IMR-90 (cell line): ENCODE measurements at regions of chr14 and their contacts with region 1.

Region 1: GRCh38 chr14:63852817-63853731 is at the start of gene SYNE2:
- DNase-seq: peak; percentile 65
- ATAC-seq: peak; percentile 98
- H3K4me3 ChIP-seq: peak within 1 kb of the TSS; percentile 71
- H3K27ac ChIP-seq: no peak within 1 kb of the TSS; the same call in 1 of the 2 replicates
- H3K4me1 ChIP-seq: no peaks in the 10 kb centered on the region
- H3K27me3 ChIP-seq: peaks cover 3% of the 10 kb centered on the region
- CTCF ChIP-seq: peak; percentile 32; the same call in 1 of the 2 replicates
- POLR2A ChIP-seq: no peak
- RAD21 ChIP-seq: no peak
- total RNA-seq, gene SYNE2: 18.6 and 28.9 TPM in 2 replicates

Region 2: DNA sequence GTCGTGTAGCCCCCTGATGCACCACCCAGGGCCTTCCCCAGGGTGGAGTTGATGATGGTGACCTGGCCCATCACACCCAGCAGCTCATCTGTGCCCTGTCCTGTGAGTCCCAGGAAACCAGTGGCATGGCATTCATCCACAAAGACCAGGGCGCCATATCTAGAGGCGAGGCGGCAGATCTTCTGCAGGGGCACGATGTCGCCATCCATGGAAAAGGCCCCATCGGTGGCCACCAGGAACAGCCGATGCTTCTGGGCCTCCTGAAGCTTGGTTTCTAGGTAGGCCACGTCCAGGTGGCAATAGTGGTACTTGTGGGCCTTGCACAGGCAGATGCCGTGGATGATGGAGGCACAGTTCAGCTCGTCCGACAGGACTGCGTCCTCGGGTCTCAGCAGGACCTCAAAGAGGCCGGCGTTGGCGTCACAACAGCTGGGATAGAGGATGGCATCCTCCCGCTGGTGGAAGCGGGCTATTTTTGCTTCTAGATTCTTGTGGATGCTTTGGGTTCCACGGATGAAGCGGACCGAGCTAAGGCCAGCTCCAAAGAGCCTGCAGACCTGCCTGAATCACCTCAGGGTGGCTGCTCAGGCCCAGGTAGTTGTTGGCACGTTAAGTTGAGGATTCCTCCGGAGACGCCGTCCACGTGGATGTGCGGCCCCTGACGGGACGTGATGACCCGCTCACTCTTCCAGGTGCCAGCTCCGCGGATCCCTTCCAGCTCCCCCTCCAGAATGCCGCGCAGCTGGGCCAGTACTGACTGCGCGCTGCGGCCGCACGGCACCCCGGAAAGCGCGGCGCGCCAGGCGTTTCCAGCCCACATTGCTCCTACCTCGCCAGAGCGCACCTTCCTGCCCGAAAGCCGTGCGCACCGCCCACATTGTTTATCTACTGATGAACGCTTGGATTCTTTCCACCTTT is 258.4 kb before region 1 on chr14:
- CTCF ChIA-PET with region 1: no interaction called
- POLR2A ChIA-PET with region 1: no interaction called
- dilution Hi-C with region 1: no loop called
- in situ Hi-C with region 1: no loop called
- intact Hi-C with region 1: no loop called
- DNase-seq: no peak
- ATAC-seq: no peak
- H3K4me3 ChIP-seq: no peak overlapping the region
- H3K27ac ChIP-seq: no peak overlapping the region
- H3K4me1 ChIP-seq: no peaks in the 10 kb centered on the region
- H3K27me3 ChIP-seq: no peaks in the 10 kb centered on the region
- CTCF ChIP-seq: no peak
- POLR2A ChIP-seq: no peak
- RAD21 ChIP-seq: no peak

Region 3: GRCh38 chr14:63896278-63896720 is 43.2 kb after region 1 on chr14:
- CTCF ChIA-PET with region 1: no interaction called
- POLR2A ChIA-PET with region 1: no interaction called
- dilution Hi-C with region 1: no loop called
- in situ Hi-C with region 1: no loop called
- intact Hi-C with region 1: loop called (anchors 2 kb)
- DNase-seq: peak; percentile 71
- ATAC-seq: peak; percentile 13
- H3K4me3 ChIP-seq: no peak overlapping the region
- H3K27ac ChIP-seq: no peak overlapping the region
- H3K4me1 ChIP-seq: peaks cover 11% of the 10 kb centered on the region
- H3K27me3 ChIP-seq: peaks cover 1% of the 10 kb centered on the region; the same call in 1 of the 2 replicates
- CTCF ChIP-seq: no peak
- POLR2A ChIP-seq: no peak
- RAD21 ChIP-seq: no peak

Region 4: GRCh38 chr14:63960926-63961567 is 108.0 kb after region 1 on chr14:
- CTCF ChIA-PET with region 1: no interaction called
- POLR2A ChIA-PET with region 1: no interaction called
- dilution Hi-C with region 1: no loop called
- in situ Hi-C with region 1: no loop called
- intact Hi-C with region 1: loop called (anchors 10 kb)
- DNase-seq: peak; percentile 60
- ATAC-seq: peak; percentile 89
- H3K4me3 ChIP-seq: no peak overlapping the region
- H3K27ac ChIP-seq: no peak overlapping the region
- H3K4me1 ChIP-seq: 0 out of 2 replicates have a peak, but pooled peaks cover 2% of the 10 kb centered on the region
- H3K27me3 ChIP-seq: no peaks in the 10 kb centered on the region
- CTCF ChIP-seq: no peak
- POLR2A ChIP-seq: no peak
- RAD21 ChIP-seq: no peak

Region 5: GRCh38 chr14:63993992-63994391 is 140.9 kb after region 1 on chr14:
- CTCF ChIA-PET with region 1: interaction called, 3 read pairs
- POLR2A ChIA-PET with region 1: no interaction called
- dilution Hi-C with region 1: no loop called
- in situ Hi-C with region 1: no loop called
- intact Hi-C with region 1: loop called (anchors 10 kb)
- DNase-seq: no peak
- ATAC-seq: no peak
- H3K4me3 ChIP-seq: no peak overlapping the region
- H3K27ac ChIP-seq: no peak overlapping the region
- H3K4me1 ChIP-seq: no peaks in the 10 kb centered on the region
- H3K27me3 ChIP-seq: no peaks in the 10 kb centered on the region
- CTCF ChIP-seq: no peak; the same call in 1 of the 2 replicates
- POLR2A ChIP-seq: no peak
- RAD21 ChIP-seq: no peak

Region 6: GRCh38 chr14:64400829-64401459 is 547.9 kb after region 1 on chr14:
- CTCF ChIA-PET with region 1: no interaction called
- POLR2A ChIA-PET with region 1: no interaction called
- dilution Hi-C with region 1: no loop called
- in situ Hi-C with region 1: no loop called
- intact Hi-C with region 1: no loop called
- DNase-seq: no peak
- ATAC-seq: peak; percentile 21; the same call in 1 of the 2 replicates
- H3K4me3 ChIP-seq: no peak overlapping the region
- H3K27ac ChIP-seq: no peak overlapping the region
- H3K4me1 ChIP-seq: no peaks in the 10 kb centered on the region
- H3K27me3 ChIP-seq: no peaks in the 10 kb centered on the region
- CTCF ChIP-seq: no peak
- POLR2A ChIP-seq: no peak
- RAD21 ChIP-seq: no peak